A673 (cell line): ENCODE measurements at regions of chr14 and their contacts with region 1.

Region 1: GRCh38 chr14:60815371-60815770 is 80.8 kb downstream of the MNAT1 start:
- DNase-seq: no peak
- H3K4me3 ChIP-seq: no peak overlapping the region
- H3K27ac ChIP-seq: no peak overlapping the region
- H3K4me1 ChIP-seq: no peaks in the 10 kb centered on the region
- H3K27me3 ChIP-seq: no peaks in the 10 kb centered on the region
- CTCF ChIP-seq: no peak

Region 2: GRCh38 chr14:60980811-60981632 is 165.7 kb after region 1 on chr14 and contains the starts of genes SLC38A6 and TRMT5:
- CTCF ChIA-PET with region 1: no interaction called
- POLR2A ChIA-PET with region 1: interaction called, 15 read pairs
- intact Hi-C with region 1: no loop called
- DNase-seq: peak; percentile 97
- H3K4me3 ChIP-seq: peak within 1 kb of the TSS; percentile 84
- H3K27ac ChIP-seq: peak within 1 kb of the TSS; percentile 94
- H3K4me1 ChIP-seq: peaks cover 26% of the 10 kb centered on the region
- H3K27me3 ChIP-seq: no peaks in the 10 kb centered on the region
- CTCF ChIP-seq: no peak
- total RNA-seq, gene SLC38A6: 25.8 and 28.0 TPM in 2 replicates
- total RNA-seq, gene TRMT5: 21.9 and 26.2 TPM in 2 replicates

Region 3: GRCh38 chr14:61160798-61161197 is 345.4 kb after region 1 on chr14:
- CTCF ChIA-PET with region 1: no interaction called
- POLR2A ChIA-PET with region 1: no interaction called
- intact Hi-C with region 1: no loop called
- DNase-seq: peak; percentile 36
- H3K4me3 ChIP-seq: no peak overlapping the region
- H3K27ac ChIP-seq: no peak overlapping the region
- H3K4me1 ChIP-seq: peaks cover 4% of the 10 kb centered on the region
- H3K27me3 ChIP-seq: no peaks in the 10 kb centered on the region
- CTCF ChIP-seq: no peak